PC-9 (cell line): ENCODE measurements at regions of chr7 and their contacts with region 1.

Region 1: DNA sequence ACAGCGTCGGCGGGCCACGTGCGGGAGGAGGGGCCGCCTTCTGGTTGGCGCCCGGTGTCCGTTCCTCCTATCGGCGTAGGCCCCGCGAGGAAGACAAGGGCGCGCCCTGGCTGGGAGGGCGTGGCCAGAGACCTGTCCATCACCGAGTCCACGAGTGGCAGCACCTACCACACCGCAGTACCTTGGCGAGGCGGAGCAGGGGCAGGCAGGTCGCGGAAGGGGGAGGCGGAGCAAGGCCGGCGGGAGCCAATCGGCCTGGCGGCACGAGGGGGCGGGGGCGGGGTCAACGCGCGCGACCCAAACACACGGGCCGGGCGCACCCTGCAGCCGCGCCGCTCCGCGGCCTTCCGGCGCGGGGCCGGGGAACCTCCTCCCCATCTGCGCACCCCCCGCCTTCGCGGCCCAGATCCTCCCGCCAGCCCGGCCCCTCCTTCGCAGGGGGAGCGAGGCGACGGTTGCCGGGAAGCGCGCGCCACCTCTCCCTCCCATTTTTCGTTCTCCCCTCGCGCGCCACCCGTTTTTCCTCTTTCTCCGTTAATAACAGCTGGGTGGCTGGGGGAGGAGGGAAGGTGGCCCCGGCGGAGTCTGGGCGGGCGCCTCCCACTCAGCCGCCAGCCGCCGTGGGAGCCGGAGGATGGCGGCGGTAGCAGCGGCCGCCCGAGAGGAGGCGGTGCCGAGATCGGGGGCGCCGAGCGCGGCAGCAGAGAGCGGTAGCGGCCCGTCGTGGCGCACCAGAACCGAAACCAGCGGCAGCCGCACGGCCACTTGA is at the start of gene ZNRF2:
- DNase-seq: peak; percentile 99 to 100
- H3K4me3 ChIP-seq: peak within 1 kb of the TSS; percentile 74
- H3K27ac ChIP-seq: peak within 1 kb of the TSS; percentile 79
- H3K4me1 ChIP-seq: peaks cover 32% of the 10 kb centered on the region
- H3K27me3 ChIP-seq: no peaks in the 10 kb centered on the region
- CTCF ChIP-seq: no peak; the same call in 1 of the 2 replicates
- total RNA-seq, gene ZNRF2: 24.7 and 28.2 TPM in 2 replicates

Region 2: GRCh38 chr7:29976673-29977415 is 307.6 kb before region 1 on chr7:
- CTCF ChIA-PET with region 1: no interaction called
- POLR2A ChIA-PET with region 1: interaction called, 10 read pairs
- intact Hi-C with region 1: no loop called
- DNase-seq: no peak
- H3K4me3 ChIP-seq: no peak overlapping the region
- H3K27ac ChIP-seq: no peak overlapping the region
- H3K4me1 ChIP-seq: no peaks in the 10 kb centered on the region
- H3K27me3 ChIP-seq: no peaks in the 10 kb centered on the region
- CTCF ChIP-seq: no peak

Region 3: DNA sequence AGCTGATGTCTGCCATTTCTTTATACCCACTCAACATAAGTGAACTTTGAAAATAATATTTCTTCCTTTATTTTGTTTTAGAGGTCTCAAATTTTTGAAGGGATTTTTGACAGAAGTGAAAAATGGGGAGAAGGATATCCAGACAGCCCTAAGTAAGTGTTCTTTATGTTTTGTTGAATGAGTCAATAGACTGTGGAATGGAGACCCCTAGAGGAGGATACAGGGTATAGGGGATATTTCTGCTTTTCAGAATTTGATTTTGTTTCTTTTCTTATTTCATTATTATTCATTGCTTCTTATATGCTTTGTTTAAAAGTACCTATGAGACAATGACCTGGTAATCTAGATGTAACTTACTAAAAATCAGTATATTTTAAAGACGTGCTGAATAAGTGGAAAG is 221.9 kb before region 1 on chr7:
- CTCF ChIA-PET with region 1: no interaction called
- POLR2A ChIA-PET with region 1: no interaction called
- intact Hi-C with region 1: loop called (anchors 10 kb)
- DNase-seq: peak in 1 of 2 experiments; percentile 53
- H3K4me3 ChIP-seq: no peak overlapping the region
- H3K27ac ChIP-seq: no peak overlapping the region
- H3K4me1 ChIP-seq: peaks cover 4% of the 10 kb centered on the region
- H3K27me3 ChIP-seq: no peaks in the 10 kb centered on the region
- CTCF ChIP-seq: peak; percentile 89

Region 4: DNA sequence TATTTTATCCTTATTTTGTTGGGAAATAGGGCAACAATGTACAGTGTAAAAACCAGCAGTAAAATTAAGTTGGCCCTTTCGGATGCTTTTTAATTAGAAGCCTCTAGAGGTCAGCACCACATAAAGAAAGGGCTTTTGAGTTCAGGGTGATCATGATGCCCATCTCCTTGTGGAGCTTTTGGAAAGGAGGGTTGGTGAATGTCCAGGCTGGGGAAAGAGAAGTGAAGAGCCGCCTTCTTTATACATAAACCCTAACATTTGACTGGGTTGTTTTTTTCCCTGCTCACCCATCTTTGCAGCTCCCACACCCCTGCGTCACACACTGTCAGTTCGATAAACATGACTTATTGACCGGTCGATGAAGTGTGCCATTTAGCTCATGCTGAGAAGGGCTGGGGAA is 119.9 kb before region 1 on chr7:
- CTCF ChIA-PET with region 1: interaction called, 3 read pairs
- POLR2A ChIA-PET with region 1: interaction called, 7 read pairs
- intact Hi-C with region 1: loop called (anchors 1 kb)
- DNase-seq: peak; percentile 32 to 68
- H3K4me3 ChIP-seq: no peak overlapping the region
- H3K27ac ChIP-seq: no peak overlapping the region
- H3K4me1 ChIP-seq: peaks cover 52% of the 10 kb centered on the region
- H3K27me3 ChIP-seq: no peaks in the 10 kb centered on the region
- CTCF ChIP-seq: peak; percentile 86

Region 5: DNA sequence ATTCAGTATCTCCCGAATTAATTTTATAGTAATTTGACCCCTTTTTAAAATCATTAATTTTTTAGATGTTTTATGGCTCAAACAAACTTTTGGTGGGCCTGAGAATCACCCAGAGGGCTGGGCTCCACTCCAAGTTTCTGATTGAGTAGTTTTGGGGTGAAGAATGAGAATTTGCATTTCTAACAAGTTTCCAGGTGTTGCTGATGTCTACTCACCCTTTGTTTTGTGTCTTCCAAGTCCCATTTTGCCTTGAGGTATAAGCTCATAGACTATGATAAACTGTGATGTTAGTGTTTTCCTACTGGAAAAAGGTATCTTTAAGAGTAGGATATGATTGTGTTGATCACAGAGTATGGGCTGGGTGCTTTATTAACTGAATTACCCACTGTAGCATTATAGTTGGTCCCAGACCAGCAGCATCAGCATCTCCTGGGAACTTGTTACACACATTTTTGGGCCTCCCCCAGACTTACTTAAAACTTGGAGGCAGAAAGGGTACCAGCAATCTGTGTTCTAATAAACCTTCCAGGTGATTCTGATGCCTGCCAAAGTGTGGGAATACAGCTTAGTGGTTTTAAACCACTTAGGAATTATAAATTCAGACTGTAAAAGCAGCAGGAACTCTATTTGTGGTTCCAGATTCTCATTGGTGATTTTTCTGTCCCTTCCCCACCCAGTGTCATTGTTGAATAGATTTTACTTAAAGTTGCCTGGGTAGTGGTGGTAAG is 19.0 kb after region 1 on chr7:
- CTCF ChIA-PET with region 1: interaction called, 15 read pairs
- POLR2A ChIA-PET with region 1: interaction called, 12 read pairs
- intact Hi-C with region 1: no loop called
- DNase-seq: no peak
- H3K4me3 ChIP-seq: no peak overlapping the region
- H3K27ac ChIP-seq: no peak overlapping the region
- H3K4me1 ChIP-seq: peaks cover 17% of the 10 kb centered on the region
- H3K27me3 ChIP-seq: no peaks in the 10 kb centered on the region
- CTCF ChIP-seq: no peak

Region 6: DNA sequence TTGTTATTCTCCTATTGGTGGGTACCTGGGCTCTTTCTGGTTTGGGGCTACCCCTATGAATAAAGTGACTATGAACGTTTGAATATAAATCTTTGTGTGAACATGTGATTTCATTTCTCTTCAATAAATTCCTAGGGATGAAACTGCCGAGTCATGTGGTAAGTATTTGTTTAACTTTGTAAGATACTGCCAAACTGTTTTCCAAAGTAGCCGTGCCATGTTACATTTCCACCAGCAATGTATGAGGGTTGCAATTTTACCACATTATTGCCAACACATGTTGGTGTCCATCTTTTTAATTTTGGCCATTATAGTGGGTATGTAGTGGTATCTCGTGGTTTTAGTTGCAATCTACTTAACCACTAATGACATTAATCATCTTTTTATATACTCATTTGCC is 94.6 kb after region 1 on chr7:
- CTCF ChIA-PET with region 1: no interaction called
- POLR2A ChIA-PET with region 1: interaction called, 12 read pairs
- intact Hi-C with region 1: no loop called
- DNase-seq: no peak
- H3K4me3 ChIP-seq: no peak overlapping the region
- H3K27ac ChIP-seq: no peak overlapping the region
- H3K4me1 ChIP-seq: peaks cover 9% of the 10 kb centered on the region
- H3K27me3 ChIP-seq: no peaks in the 10 kb centered on the region
- CTCF ChIP-seq: no peak

Region 7: DNA sequence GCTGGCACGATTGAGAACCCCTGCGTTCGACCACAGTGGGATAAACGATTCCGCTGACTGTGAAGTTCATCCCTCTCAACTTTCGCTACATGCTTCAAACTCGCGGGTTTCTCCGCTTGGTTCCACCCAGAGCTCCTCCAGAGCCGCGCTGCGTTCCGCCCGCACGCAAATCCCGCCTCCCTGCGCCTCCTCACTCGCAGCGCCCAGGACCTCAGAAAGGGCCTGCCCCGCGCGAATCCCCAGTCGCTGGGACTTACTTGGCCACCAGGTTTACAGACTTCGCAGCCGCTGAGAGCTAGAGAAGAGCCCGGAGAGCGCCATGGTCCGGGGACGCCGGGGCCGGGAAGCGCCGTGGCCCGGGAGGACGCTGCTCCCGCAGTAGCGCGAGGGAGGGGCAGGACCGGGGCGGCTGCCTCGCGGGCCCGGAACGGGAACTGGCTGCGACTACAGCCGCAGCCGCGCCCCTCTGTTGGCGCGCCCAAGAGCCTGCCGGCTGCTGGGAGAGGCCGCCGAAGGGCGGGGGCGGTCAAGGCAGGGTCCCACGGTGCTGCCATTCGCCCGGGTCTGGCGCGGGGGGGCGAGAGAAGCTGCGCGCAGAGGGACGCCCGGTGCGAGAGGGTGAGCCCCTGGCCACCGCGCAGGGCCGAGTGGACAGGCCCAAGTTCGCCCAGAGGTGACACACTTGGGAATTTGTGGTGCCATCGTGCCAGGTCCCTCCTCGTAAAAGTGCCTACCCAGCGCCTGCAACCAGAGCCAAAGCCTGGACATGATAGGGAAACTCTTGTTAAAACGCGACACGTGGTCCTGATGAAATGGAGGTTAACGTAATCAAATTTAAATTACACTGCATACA is 194.1 kb after region 1 on chr7 and contains the start of gene NOD1:
- CTCF ChIA-PET with region 1: no interaction called
- POLR2A ChIA-PET with region 1: no interaction called
- intact Hi-C with region 1: loop called (anchors 1 kb)
- DNase-seq: peak; percentile 73 to 85
- H3K4me3 ChIP-seq: peak within 1 kb of the TSS; percentile 73
- H3K27ac ChIP-seq: peak within 1 kb of the TSS; percentile 76
- H3K4me1 ChIP-seq: peaks cover 21% of the 10 kb centered on the region
- H3K27me3 ChIP-seq: no peaks in the 10 kb centered on the region
- CTCF ChIP-seq: no peak; the same call in 1 of the 2 replicates
- total RNA-seq, gene NOD1: 16.5 and 20.5 TPM in 2 replicates

Region 8: DNA sequence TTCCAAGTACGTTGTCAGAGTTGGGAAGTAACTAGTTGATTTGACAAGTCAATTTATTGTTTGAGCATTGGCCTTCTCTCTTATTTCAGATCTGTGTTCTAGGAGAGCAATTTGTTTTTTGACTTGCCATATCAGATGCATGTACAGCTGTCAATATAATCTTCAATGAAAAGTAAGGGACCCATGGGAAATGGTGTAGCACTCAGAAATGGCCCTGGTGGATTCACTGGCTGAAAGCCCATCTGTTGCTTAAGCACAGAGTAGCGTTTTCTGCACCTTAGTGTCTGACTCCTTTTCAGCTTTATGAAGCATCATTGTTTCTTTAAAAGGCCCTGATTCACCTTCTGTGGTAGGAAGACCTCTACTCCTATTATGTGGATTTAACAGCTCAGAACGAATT is 320.4 kb after region 1 on chr7:
- CTCF ChIA-PET with region 1: no interaction called
- POLR2A ChIA-PET with region 1: no interaction called
- intact Hi-C with region 1: no loop called
- DNase-seq: no peak
- H3K4me3 ChIP-seq: no peak overlapping the region
- H3K27ac ChIP-seq: no peak overlapping the region
- H3K4me1 ChIP-seq: no peaks in the 10 kb centered on the region
- H3K27me3 ChIP-seq: no peaks in the 10 kb centered on the region
- CTCF ChIP-seq: no peak